Transverse colon (tissue), 4 donors: ENCODE measurements at regions of chr2 and their contacts with region 1.

Region 1: DNA sequence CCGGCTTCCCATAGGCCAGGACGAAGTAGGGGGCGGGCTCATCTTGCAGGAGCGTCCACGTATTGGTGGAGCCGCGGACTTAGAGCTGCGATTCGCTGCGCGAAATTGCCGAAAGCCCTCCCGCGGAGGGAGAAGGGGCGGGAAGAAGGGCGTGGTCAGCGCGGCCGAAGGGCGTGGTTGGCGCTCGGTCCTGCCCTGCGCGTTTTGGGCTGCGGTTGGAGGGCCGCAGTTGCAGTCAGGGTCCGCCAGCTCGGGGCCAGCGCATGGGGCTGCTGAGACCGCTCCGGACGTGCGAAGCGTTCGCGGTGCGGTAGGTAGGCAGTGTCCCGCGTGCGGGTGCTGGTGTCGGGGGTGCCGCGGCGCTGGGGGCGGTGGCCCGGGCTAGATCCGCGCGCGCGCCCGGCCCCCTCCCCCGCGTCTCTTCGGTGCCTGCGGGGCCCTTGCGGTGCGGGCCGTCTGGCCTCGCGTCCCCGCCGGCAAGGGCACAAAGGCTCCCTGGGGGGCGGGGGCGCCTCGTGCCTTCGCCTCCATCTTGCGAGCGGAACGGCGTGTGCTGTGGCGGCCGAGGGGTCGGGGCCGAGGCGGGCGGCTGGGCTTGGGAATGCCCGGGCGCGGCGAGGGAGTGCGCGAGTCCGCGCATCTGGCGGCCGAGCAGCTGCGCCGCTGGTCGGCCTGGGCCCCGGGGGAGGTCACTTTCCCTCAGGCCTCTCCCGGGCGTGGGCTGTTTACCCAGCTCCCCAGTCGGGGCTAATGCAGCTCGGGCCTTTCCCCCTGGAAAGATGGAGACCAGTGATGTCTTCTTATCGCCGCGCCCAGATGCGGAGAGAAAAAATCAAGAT is at the start of gene CEP68:
- DNase-seq: peak; percentile 98
- H3K4me3 ChIP-seq: peak within 1 kb of the TSS; percentile 81 to 98 (median 94)
- H3K27ac ChIP-seq: peak within 1 kb of the TSS; percentile 94 to 96 (median 96)
- H3K4me1 ChIP-seq: peaks cover 6 to 56% (median 36%) of the 10 kb centered on the region in 4 donors
- H3K27me3 ChIP-seq: no peaks in the 10 kb centered on the region
- CTCF ChIP-seq: no peak
- EP300 ChIP-seq: no peak
- POLR2A ChIP-seq: peak; percentile 79
- total RNA-seq, gene CEP68: 11.6 to 32.2 (median 15.9) TPM

Region 2: DNA sequence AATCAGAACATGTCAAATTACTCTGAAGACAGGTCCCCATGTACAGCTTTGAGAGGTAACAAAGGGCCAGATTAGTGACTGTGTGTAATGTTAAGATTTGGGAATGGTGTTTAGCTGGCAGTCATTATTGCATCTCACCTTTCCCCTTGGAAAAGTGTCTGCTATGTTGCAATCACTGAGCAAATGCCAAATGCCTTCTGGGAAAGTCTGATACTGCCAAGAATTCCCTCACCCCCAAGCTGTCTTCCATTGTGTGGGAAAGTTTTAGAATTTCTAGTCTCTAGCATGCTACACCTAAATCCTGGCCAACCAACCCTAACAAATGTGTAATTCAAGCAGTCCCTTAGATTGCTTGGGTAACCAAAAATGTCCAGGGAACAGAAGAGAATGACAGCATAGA is 898.6 kb before region 1 on chr2:
- in situ Hi-C with region 1: no loop called
- intact Hi-C with region 1: no loop called
- DNase-seq: no peak
- H3K4me3 ChIP-seq: no peak overlapping the region
- H3K27ac ChIP-seq: no peak overlapping the region
- H3K4me1 ChIP-seq: peaks cover 0 to 15% (median 7%) of the 10 kb centered on the region in 4 donors
- H3K27me3 ChIP-seq: no peaks in the 10 kb centered on the region
- CTCF ChIP-seq: no peak
- EP300 ChIP-seq: no peak
- POLR2A ChIP-seq: no peak

Region 3: GRCh38 chr2:64988420-64989125 is 67.9 kb before region 1 on chr2:
- in situ Hi-C with region 1: no loop called
- intact Hi-C with region 1: loop called (anchors 10 kb)
- DNase-seq: peak; percentile 79
- H3K4me3 ChIP-seq: peak overlapping the region; percentile 59 to 88 (median 81)
- H3K27ac ChIP-seq: peak overlapping the region; percentile 94 to 98 (median 96)
- H3K4me1 ChIP-seq: peaks cover 6 to 34% (median 24%) of the 10 kb centered on the region in 4 donors
- H3K27me3 ChIP-seq: no peaks in the 10 kb centered on the region
- CTCF ChIP-seq: peak; percentile 42 to 67 (median 55)
- EP300 ChIP-seq: no peak
- POLR2A ChIP-seq: peak; percentile 62

Region 4: DNA sequence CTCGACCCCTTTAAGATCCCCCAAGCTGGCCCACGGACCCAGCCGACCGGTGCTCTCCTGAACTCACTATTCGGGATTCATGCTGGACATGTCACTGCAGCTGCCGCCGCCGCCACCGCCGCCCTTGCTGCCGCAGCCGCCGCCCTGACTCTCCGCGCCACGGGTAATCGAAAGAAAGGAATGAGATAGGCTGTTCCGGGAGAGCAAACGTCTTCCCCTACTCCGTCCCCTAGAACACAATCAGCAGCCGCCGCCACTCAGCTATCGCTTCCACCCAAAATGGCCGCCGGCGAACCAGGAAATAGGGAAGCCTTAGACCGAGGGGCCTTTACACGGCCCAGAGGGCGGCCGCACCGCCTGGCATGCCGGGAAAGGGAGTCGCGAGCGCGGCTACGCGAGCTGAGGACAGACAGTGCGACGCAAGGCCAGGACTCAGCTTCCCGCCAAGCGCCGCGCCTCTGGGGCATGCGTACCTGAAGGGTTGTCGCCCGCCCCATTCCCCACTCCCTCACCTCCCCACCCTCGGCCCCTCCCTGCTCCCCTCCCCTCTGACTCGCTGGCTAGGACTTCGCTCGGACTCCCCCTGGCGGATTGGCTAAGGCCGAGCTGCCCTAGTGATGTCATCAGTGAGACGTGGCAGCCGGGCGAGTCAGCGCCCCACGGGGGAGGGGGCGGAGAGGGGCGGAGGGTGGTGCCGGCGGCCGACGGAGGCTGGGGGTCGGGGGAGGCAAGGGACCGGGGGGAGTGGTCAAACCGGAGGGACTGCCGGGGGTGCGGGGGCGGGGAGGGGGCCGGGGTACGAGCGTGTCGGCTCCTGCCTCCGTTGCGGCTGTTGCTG is 73.6 kb after region 1 on chr2 and contains the start of gene RAB1A:
- in situ Hi-C with region 1: no loop called
- intact Hi-C with region 1: loop called (anchors 2 kb)
- DNase-seq: peak; percentile 99
- H3K4me3 ChIP-seq: peak within 1 kb of the TSS; percentile 82 to 92 (median 89)
- H3K27ac ChIP-seq: peak within 1 kb of the TSS; percentile 95 to 99 (median 96)
- H3K4me1 ChIP-seq: peaks cover 11 to 45% (median 41%) of the 10 kb centered on the region in 4 donors
- H3K27me3 ChIP-seq: no peaks in the 10 kb centered on the region
- CTCF ChIP-seq: peak; percentile 28 to 48 (median 40)
- EP300 ChIP-seq: peak; percentile 30
- POLR2A ChIP-seq: peak; percentile 96
- total RNA-seq, gene RAB1A: 16.9 to 98.3 (median 55.0) TPM

Region 5: DNA sequence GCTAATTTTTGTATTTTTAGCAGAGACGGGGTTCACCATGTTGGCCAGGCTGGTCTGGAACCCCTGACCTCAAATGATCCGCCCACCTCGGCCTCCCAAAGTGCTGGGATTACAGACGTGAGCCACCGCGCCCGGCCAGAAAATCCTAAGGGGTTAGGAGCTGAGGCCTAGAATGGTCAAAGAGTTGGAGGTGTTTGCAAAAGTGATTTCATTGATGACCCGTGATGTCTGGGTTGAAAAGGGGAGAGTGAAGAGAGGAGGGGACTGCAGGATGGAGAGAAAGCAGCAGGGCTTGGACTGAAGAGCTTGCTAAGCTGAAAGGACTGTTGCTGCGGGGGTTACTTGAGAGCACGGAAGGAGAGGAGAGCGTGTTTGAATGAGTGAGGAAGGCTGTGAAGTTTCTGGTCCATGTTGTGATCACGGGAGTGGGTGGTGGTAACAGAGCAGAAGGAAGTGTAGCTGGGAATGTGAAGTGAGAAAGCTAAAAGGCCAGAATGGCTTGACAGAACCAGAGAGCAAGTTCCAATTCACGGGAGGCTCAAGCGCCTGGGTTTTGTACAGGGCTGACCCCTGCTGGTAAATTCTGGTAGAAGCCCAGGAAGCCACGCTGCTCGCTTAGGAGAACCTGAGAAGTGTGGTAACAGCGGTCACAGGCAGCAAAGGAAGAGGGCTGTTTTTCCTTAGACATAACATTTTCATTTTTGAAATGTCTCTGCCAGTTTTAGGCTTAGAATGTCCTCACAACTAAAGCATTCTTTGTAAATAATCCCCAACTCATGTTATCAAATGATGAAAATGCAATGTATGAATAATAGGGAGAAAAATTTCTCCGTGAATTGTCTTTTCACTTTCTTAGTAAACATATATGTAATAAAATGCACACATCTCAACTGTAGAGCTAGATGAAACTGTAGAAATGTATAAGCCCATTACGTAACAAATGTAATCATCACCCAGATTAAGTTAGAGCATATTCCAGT is 130.7 kb after region 1 on chr2:
- in situ Hi-C with region 1: loop called in 3 of 4 experiments (anchors 10 to 25 kb)
- intact Hi-C with region 1: no loop called
- DNase-seq: peak; percentile 89
- H3K4me3 ChIP-seq: peak overlapping the region in 1 of 4 donors; percentile 13
- H3K27ac ChIP-seq: peak overlapping the region; percentile 68 to 83 (median 76)
- H3K4me1 ChIP-seq: peaks cover 5 to 25% (median 13%) of the 10 kb centered on the region in 4 donors
- H3K27me3 ChIP-seq: no peaks in the 10 kb centered on the region
- CTCF ChIP-seq: peak; percentile 74 to 88 (median 84)
- EP300 ChIP-seq: no peak
- POLR2A ChIP-seq: no peak

Region 6: DNA sequence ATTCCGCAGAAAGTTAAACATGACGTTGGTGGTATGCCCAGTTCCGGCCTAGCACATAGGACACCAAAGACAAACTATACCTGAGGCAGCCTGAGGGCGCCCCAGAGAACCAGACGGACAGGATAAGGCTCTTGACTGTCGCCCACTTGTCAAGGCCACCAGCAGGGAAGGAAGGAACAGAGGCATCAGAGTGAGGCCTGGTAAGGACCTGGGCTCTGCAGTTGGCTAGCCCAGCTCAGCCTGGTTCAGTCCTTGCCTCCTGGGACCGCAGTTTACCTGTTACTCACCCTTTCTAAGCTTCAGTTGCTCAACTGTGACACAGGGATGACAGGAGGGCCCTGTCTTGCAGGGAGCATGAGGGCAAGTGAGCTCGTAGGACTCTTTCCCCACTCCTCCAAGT is 253.3 kb after region 1 on chr2:
- in situ Hi-C with region 1: no loop called
- intact Hi-C with region 1: no loop called
- DNase-seq: no peak
- H3K4me3 ChIP-seq: no peak overlapping the region
- H3K27ac ChIP-seq: peak overlapping the region; percentile 28 to 53 (median 28)
- H3K4me1 ChIP-seq: peaks cover 0 to 6% (median 2%) of the 10 kb centered on the region in 4 donors
- H3K27me3 ChIP-seq: no peaks in the 10 kb centered on the region
- CTCF ChIP-seq: no peak
- EP300 ChIP-seq: no peak
- POLR2A ChIP-seq: no peak

Region 7: DNA sequence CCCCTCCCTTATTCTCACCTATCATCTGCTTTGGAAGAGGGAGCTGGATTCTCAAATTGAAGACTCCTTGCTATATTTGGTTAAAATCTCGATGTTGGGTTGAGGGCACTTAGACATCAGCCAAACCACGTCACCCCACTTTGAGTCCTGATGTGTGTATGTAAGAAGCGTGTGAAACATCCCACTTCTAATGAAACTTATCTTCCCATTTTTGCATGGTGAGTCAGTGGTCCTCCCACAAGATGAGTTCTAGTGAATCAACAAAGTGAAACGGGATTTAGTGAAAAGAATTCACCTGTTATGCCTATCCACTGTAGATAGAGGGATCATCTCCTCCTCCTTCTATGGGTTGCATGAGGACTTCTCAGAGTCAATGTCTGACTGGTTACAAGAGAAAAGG is 427.3 kb after region 1 on chr2:
- in situ Hi-C with region 1: no loop called
- intact Hi-C with region 1: no loop called
- DNase-seq: no peak
- H3K4me3 ChIP-seq: no peak overlapping the region
- H3K27ac ChIP-seq: no peak overlapping the region
- H3K4me1 ChIP-seq: no peaks in the 10 kb centered on the region
- H3K27me3 ChIP-seq: no peaks in the 10 kb centered on the region
- CTCF ChIP-seq: no peak
- EP300 ChIP-seq: no peak
- POLR2A ChIP-seq: no peak

Region 8: GRCh38 chr2:65554765-65555591 is 498.5 kb after region 1 on chr2:
- in situ Hi-C with region 1: loop called in 2 of 4 experiments (anchors 25 kb)
- intact Hi-C with region 1: no loop called
- DNase-seq: no peak
- H3K4me3 ChIP-seq: no peak overlapping the region
- H3K27ac ChIP-seq: no peak overlapping the region
- H3K4me1 ChIP-seq: peaks cover 0 to 5% (median 4%) of the 10 kb centered on the region in 4 donors
- H3K27me3 ChIP-seq: no peaks in the 10 kb centered on the region
- CTCF ChIP-seq: no peak
- EP300 ChIP-seq: no peak
- POLR2A ChIP-seq: no peak

Region 9: DNA sequence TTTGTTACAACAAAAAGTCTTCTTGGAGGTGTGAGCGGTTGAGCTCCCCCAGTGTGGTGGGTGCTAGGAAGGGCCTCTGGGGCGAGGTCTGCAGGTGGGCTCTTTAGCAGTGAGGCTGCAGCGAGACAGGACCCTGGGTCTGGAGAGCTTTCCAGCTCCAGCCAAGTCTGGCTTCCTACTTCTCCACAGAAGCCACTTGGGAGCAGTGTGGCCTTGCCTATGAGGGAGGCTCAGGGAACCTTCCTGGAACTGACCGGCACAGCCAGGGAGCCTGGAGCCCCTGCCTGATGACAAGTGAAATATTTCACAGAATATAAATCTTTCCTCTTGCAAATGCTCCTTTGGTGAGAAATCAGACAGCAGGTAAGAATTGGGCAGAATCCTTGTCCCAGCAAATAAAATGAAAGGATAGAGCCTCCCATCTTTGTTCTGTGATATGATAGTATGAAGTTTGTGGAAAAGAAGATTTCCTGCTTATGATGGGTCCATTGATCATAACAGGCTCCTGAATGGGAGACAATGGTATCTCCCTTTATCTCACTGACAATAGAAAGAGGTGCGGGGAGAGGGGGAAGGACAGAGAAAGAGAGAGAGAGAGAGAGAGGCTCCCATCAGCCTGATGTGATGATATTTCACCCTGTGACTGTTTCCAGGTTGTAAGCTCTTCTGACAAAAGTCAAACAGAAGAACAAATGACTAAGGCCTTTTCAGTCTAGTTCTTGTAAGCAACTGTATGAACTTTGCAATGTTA is 665.8 kb after region 1 on chr2:
- in situ Hi-C with region 1: no loop called
- intact Hi-C with region 1: no loop called
- DNase-seq: peak; percentile 30
- H3K4me3 ChIP-seq: no peak overlapping the region
- H3K27ac ChIP-seq: no peak overlapping the region
- H3K4me1 ChIP-seq: no peaks in the 10 kb centered on the region
- H3K27me3 ChIP-seq: no peaks in the 10 kb centered on the region
- CTCF ChIP-seq: peak in 2 of 5 experiments; percentile 10 to 25
- EP300 ChIP-seq: no peak
- POLR2A ChIP-seq: no peak